Activated CD8-positive, alpha-beta T cell treated with anti-CD3 and anti-CD28 coated beads for 36 hours (primary cell): ENCODE measurements at regions of chr16 and their contacts with region 1.

Region 1: GRCh38 chr16:2155091-2156021 is at the start of gene TRAF7:
- DNase-seq: peak; percentile 99
- ATAC-seq: peak; percentile 95
- H3K4me3 Mint-ChIP-seq: peak within 1 kb of the TSS; percentile 86
- H3K27ac Mint-ChIP-seq: peak within 1 kb of the TSS; percentile 89
- H3K4me1 Mint-ChIP-seq: peaks cover 30% of the 10 kb centered on the region
- H3K27me3 Mint-ChIP-seq: no peaks in the 10 kb centered on the region
- CTCF ChIP-seq: no peak
- total RNA-seq, gene TRAF7: 74.8 to 80.2 TPM

Region 2: DNA sequence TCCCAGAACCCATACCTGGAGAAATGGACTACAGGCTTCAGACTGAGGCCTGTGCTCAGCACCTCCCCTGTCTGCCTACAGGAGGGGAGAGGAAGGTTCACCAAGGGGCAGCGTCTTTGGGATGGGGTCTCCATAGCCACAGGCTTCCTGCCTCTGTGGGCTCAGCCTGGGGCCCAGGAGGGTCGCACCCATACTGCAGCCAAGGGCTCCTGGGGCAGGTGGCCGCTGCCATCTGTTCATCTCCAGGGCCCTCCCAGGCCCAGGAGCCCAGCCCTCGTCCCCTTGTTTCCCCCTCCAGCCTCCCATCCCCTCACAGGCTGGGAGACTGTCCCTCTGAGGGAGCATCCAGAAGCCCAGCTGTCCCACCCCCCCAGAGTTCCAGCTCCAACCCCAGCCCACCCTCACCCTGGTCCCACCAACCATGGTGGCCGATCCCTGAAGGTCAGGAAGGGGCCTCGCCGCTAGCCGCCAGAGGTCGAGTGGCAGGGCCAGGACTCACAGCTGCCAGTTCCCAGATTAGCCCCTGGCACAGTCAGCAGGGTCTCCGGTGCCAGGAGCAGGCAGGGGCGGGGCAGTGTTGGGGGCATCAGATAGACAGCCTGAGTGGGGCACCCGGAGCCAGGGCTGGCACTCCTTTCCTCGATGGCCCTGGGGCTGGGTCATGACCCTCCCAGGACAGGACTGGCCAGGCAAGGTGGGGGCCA is 201.0 kb before region 1 on chr16 and contains the start of gene RPL3L:
- CTCF ChIA-PET with region 1: no interaction called
- POLR2A ChIA-PET with region 1: no interaction called
- intact Hi-C with region 1: no loop called
- DNase-seq: no peak
- ATAC-seq: no peak
- H3K4me3 Mint-ChIP-seq: no peak within 1 kb of the TSS
- H3K27ac Mint-ChIP-seq: no peak within 1 kb of the TSS
- H3K4me1 Mint-ChIP-seq: peaks cover 6% of the 10 kb centered on the region
- H3K27me3 Mint-ChIP-seq: no peaks in the 10 kb centered on the region
- CTCF ChIP-seq: no peak
- total RNA-seq, gene RPL3L: not detected

Region 3: DNA sequence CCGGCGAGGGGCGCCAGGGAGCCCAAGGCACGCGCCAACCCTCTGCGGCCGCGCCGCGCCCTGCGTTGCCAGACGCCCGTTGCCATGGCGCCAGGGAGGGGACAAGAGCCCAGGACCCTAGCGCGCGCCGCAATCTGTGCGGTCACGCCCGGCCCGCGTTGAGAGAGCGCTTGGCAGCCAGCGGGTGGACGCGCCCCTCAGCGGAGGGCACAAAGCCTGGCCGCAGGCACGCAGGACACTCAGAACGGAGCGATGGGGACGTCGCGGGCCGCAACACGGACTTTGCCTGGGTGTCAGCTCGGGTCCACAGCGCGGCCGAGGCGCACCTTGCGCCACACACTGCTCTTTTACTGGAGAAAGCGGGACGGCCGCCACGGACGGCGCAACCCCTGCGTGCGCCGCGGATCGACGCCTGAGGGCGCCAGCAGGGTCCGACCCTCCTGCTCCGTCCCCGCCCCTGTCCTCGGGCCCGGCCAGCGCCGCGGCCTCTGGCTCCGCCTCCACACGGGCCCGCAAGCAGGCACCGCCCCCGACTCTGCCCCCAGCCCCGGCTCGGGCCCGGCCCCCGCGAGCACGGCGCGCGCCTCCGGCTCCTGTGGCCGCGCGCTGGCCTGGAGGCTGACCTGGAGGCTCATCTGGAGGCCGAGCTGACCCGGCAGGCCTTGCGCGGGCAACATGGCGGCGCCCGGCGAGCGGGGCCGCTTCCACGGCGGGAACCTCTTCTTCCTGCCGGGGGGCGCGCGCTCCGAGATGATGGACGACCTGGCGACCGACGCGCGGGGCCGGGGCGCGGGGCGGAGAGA is 171.6 kb before region 1 on chr16 and contains the start of gene GFER:
- CTCF ChIA-PET with region 1: no interaction called
- POLR2A ChIA-PET with region 1: interaction called, 68 read pairs
- intact Hi-C with region 1: no loop called
- DNase-seq: peak; percentile 82
- ATAC-seq: peak; percentile 92
- H3K4me3 Mint-ChIP-seq: peak within 1 kb of the TSS; percentile 89
- H3K27ac Mint-ChIP-seq: peak within 1 kb of the TSS; percentile 30
- H3K4me1 Mint-ChIP-seq: peaks cover 20% of the 10 kb centered on the region
- H3K27me3 Mint-ChIP-seq: peaks cover 36% of the 10 kb centered on the region
- CTCF ChIP-seq: peak; percentile 22
- total RNA-seq, gene GFER: 33.5 to 33.9 TPM

Region 4: DNA sequence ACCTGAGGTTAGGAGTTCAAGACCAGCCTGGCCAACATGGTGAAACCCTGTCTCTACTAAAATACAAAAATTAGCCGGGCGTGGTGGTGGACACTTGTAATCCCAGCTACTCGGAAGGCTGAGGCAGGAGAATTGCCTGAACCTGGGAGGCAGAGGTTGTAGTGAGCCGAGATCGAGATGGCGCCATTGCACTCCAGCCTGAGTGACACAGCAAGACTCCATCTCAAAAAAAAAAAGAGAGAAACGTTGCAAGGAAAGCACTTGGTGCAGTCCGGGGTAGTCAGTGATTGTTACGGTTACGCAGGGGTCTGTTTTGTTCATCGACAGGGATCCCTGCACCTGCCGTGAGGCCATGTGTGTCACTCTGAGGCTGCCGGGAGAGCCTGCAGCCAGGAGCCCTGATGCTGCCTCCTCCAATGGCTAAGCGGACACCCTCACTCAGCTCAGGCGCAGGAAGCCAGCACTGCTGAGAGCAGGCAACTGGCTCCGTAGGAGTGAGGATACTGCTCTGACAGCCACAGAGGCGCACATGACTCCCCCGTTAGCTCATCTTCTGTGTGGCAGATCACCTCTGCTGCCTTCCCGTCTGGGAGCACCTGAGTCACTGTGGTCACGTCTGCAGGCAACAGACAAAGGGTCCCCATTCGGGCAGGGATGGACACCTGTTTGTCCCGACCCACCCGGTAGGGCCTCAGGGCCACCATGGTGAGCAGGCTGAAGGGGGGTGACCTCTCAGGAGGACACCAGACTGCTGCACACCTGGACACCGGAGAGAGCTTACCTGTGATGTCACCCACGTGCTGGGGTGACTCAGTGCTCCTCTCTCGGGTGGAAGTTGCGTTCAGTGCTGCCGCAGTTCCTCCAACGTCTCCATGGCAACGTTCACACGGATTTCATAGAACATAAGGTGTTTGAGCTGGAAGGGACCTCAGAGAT is 12.1 kb before region 1 on chr16:
- CTCF ChIA-PET with region 1: interaction called, 25 read pairs
- POLR2A ChIA-PET with region 1: interaction called, 63 read pairs
- intact Hi-C with region 1: no loop called
- DNase-seq: peak; percentile 36
- ATAC-seq: peak; percentile 36
- H3K4me3 Mint-ChIP-seq: no peak overlapping the region
- H3K27ac Mint-ChIP-seq: no peak overlapping the region
- H3K4me1 Mint-ChIP-seq: peaks cover 2% of the 10 kb centered on the region
- H3K27me3 Mint-ChIP-seq: no peaks in the 10 kb centered on the region
- CTCF ChIP-seq: no peak

Region 5: GRCh38 chr16:2205104-2205966 is 50.0 kb after region 1 on chr16 and contains the start of gene MLST8:
- CTCF ChIA-PET with region 1: no interaction called
- POLR2A ChIA-PET with region 1: interaction called, 95 read pairs
- intact Hi-C with region 1: no loop called
- DNase-seq: peak; percentile 85
- ATAC-seq: peak; percentile 92
- H3K4me3 Mint-ChIP-seq: peak within 1 kb of the TSS; percentile 88
- H3K27ac Mint-ChIP-seq: peak within 1 kb of the TSS; percentile 87
- H3K4me1 Mint-ChIP-seq: peaks cover 17% of the 10 kb centered on the region
- H3K27me3 Mint-ChIP-seq: no peaks in the 10 kb centered on the region
- CTCF ChIP-seq: peak; percentile 32
- total RNA-seq, gene MLST8: 70.0 to 70.7 TPM

Region 6: DNA sequence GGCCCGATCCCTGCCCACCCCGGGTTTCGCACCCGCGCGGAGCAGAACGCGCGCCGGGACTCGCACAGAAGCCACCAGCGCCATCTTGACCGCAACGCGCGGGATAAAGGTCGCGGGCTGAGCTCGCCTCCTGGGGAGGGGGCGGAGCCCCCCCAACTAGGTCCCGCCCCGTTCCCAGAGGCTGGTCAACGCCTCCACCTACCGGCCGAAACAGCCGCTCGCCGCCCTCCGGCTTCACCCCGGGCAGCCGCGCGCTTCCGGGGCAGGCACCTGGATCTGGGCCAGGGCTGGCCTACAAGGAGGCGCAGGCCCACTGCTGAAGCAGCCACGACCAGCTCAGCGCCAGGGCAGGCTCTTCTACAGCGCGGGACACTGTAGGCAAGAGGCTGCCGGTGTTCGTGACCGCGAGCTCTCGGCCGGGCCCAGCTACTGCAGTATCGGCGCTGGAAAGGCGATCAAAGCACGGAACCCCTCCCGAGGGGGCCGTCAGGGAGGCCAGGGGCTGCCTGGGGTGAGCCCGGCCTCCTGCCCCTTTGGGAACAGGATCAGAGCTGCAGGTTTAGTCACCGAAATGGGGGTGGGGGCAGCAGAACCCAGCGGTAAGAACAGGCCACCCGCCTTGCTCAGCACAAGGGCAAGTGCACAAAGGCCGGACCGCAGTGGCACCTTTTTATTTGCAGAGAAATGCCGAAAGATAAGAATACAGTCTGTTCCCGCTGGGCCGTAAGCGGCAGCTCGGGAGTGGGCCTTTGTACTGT is 96.3 kb after region 1 on chr16 and contains the start of gene ECI1:
- CTCF ChIA-PET with region 1: no interaction called
- POLR2A ChIA-PET with region 1: interaction called, 10 read pairs
- intact Hi-C with region 1: no loop called
- DNase-seq: peak; percentile 87
- ATAC-seq: peak; percentile 91
- H3K4me3 Mint-ChIP-seq: peak within 1 kb of the TSS; percentile 88
- H3K27ac Mint-ChIP-seq: peak within 1 kb of the TSS; percentile 91
- H3K4me1 Mint-ChIP-seq: peaks cover 14% of the 10 kb centered on the region
- H3K27me3 Mint-ChIP-seq: no peaks in the 10 kb centered on the region
- CTCF ChIP-seq: peak; percentile 41
- total RNA-seq, gene ECI1: 37.4 to 40.5 TPM